CD14-positive monocyte (primary cell): ENCODE measurements at regions of chr5 and their contacts with region 1.

Region 1: DNA sequence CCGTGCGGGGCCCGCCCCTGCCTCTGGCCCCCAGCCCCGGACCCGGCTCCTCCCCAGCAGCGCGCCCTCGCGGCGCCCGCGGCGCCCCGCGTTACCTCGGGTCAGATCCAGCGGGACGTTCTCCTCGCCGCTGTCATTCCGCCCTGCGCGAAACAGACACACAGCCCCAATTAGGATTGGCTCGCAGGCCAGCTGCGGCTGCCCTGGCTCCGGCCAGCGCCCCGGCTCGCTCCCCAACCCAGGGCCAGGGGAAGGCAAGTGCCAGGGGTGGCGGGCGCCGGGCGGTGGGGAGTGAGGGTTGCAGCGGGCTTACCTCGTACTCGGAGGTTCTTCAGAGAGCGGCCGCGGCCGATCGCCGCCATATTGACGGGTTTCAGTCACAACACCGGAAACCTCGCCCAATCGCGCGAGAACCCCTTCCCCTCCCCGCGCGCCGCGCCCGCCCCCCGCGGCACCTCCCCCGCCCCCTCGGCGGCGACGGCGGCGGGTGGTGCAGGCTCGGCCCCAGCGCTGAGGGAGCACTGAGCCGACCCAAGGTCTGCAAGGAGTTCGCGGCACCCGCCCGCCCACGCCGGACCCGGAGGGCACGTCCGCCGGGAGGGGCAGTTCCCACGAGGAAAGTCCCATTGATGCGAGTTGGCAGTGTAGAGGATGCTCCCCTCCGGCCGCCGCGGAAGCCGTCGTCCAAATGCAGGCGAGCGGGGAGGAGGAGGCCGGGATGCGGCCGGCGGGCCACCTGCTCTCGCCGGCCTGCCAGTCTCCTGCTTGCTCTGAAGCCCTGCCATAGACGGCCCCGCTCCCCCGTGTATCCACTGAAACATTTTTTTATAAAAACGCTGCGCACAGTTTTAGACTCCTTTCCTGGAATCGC is at the start of gene RICTOR:
- DNase-seq: peak; percentile 82 to 84 (median 84)
- H3K4me3 ChIP-seq: peak within 1 kb of the TSS; percentile 91 to 96 (median 92)
- H3K4me3 Mint-ChIP-seq: peak within 1 kb of the TSS; percentile 98
- H3K27ac ChIP-seq: peak within 1 kb of the TSS; percentile 93 to 96
- H3K27ac Mint-ChIP-seq: peak within 1 kb of the TSS; percentile 90 to 97 (median 95)
- H3K4me1 ChIP-seq: peaks cover 28 to 46% of the 10 kb centered on the region in 2 donors
- H3K4me1 Mint-ChIP-seq: peaks cover 43% of the 10 kb centered on the region
- H3K27me3 ChIP-seq: no peaks in the 10 kb centered on the region
- H3K27me3 Mint-ChIP-seq: peaks cover 0 to 1% (median 1%) of the 10 kb centered on the region in 3 donors
- CTCF ChIP-seq: no peak
- polyA plus RNA-seq, gene RICTOR: 3.5 to 12.8 (median 7.0) TPM

Region 2: GRCh38 chr5:39013938-39014337 is 60.3 kb before region 1 on chr5:
- intact Hi-C with region 1: loop called in 1 of 2 experiments (anchors 2 kb)
- DNase-seq: no peak
- H3K4me3 ChIP-seq: no peak overlapping the region
- H3K4me3 Mint-ChIP-seq: no peak overlapping the region
- H3K27ac ChIP-seq: no peak overlapping the region
- H3K27ac Mint-ChIP-seq: no peak overlapping the region
- H3K4me1 ChIP-seq: peaks cover 4 to 5% of the 10 kb centered on the region in 2 donors
- H3K4me1 Mint-ChIP-seq: peaks cover 14% of the 10 kb centered on the region
- H3K27me3 ChIP-seq: no peaks in the 10 kb centered on the region
- H3K27me3 Mint-ChIP-seq: peaks cover 0 to 2% (median 0%) of the 10 kb centered on the region in 3 donors
- CTCF ChIP-seq: no peak

Region 3: GRCh38 chr5:39040875-39041274 is 33.4 kb before region 1 on chr5:
- intact Hi-C with region 1: no loop called
- DNase-seq: no peak
- H3K4me3 ChIP-seq: no peak overlapping the region
- H3K4me3 Mint-ChIP-seq: no peak overlapping the region
- H3K27ac ChIP-seq: no peak overlapping the region
- H3K27ac Mint-ChIP-seq: no peak overlapping the region
- H3K4me1 ChIP-seq: no peaks in the 10 kb centered on the region
- H3K4me1 Mint-ChIP-seq: peaks cover 2% of the 10 kb centered on the region
- H3K27me3 ChIP-seq: no peaks in the 10 kb centered on the region
- H3K27me3 Mint-ChIP-seq: no peaks in the 10 kb centered on the region
- CTCF ChIP-seq: no peak

Region 4: GRCh38 chr5:39176759-39177630 is 102.7 kb after region 1 on chr5:
- intact Hi-C with region 1: no loop called
- DNase-seq: no peak
- H3K4me3 ChIP-seq: peak overlapping the region in 2 of 3 experiments; percentile 9 to 63
- H3K4me3 Mint-ChIP-seq: peak overlapping the region; percentile 7 to 59
- H3K27ac ChIP-seq: peak overlapping the region; percentile 4 to 84
- H3K27ac Mint-ChIP-seq: peak overlapping the region; percentile 43 to 83 (median 79)
- H3K4me1 ChIP-seq: peaks cover 62% of the 10 kb centered on the region in 2 donors
- H3K4me1 Mint-ChIP-seq: peaks cover 71% of the 10 kb centered on the region
- H3K27me3 ChIP-seq: no peaks in the 10 kb centered on the region
- H3K27me3 Mint-ChIP-seq: no peaks in the 10 kb centered on the region
- CTCF ChIP-seq: no peak

Region 5: GRCh38 chr5:39274398-39275085 is 200.3 kb after region 1 on chr5:
- intact Hi-C with region 1: loop called in 1 of 2 experiments (anchors 10 kb)
- DNase-seq: peak; percentile 57 to 81 (median 79)
- H3K4me3 ChIP-seq: peak overlapping the region; percentile 41 to 78 (median 72)
- H3K4me3 Mint-ChIP-seq: peak overlapping the region; percentile 63 to 86
- H3K27ac ChIP-seq: peak overlapping the region; percentile 77 to 84
- H3K27ac Mint-ChIP-seq: peak overlapping the region; percentile 90 to 99 (median 94)
- H3K4me1 ChIP-seq: peaks cover 53 to 63% of the 10 kb centered on the region in 2 donors
- H3K4me1 Mint-ChIP-seq: peaks cover 53% of the 10 kb centered on the region
- H3K27me3 ChIP-seq: no peaks in the 10 kb centered on the region
- H3K27me3 Mint-ChIP-seq: no peaks in the 10 kb centered on the region
- CTCF ChIP-seq: no peak